Activated CD8-positive, alpha-beta memory T cell treated with anti-CD3 and anti-CD28 coated beads, Interleukin-2, amount 10 ng/mL, durations not matched to agents 7 days and 5 days (primary cell): ENCODE measurements at regions of chr18 and their contacts with region 1.

Region 1: GRCh38 chr18:3665780-3666525 is 216.0 kb downstream of the TGIF1 start:
- DNase-seq: peak; percentile 76
- ATAC-seq: peak; percentile 78
- H3K4me3 Mint-ChIP-seq: peak overlapping the region; percentile 16
- H3K27ac Mint-ChIP-seq: no peak overlapping the region
- H3K4me1 Mint-ChIP-seq: peaks cover 21% of the 10 kb centered on the region
- H3K27me3 Mint-ChIP-seq: peaks cover 3% of the 10 kb centered on the region

Region 2: GRCh38 chr18:3297025-3297984 is 368.6 kb before region 1 on chr18:
- CTCF ChIA-PET with region 1: interaction called, 31 read pairs
- DNase-seq: peak; percentile 97
- ATAC-seq: peak; percentile 98
- H3K4me3 Mint-ChIP-seq: peak overlapping the region; percentile 85
- H3K27ac Mint-ChIP-seq: peak overlapping the region; percentile 74
- H3K4me1 Mint-ChIP-seq: peaks cover 13% of the 10 kb centered on the region
- H3K27me3 Mint-ChIP-seq: peaks cover 37% of the 10 kb centered on the region

Region 3: GRCh38 chr18:3454365-3455089 is 211.4 kb before region 1 on chr18:
- CTCF ChIA-PET with region 1: interaction called, 50 read pairs
- DNase-seq: peak; percentile 63
- ATAC-seq: no peak
- H3K4me3 Mint-ChIP-seq: peak overlapping the region; percentile 87
- H3K27ac Mint-ChIP-seq: peak overlapping the region; percentile 83
- H3K4me1 Mint-ChIP-seq: peaks cover 55% of the 10 kb centered on the region
- H3K27me3 Mint-ChIP-seq: no peaks in the 10 kb centered on the region

Region 4: DNA sequence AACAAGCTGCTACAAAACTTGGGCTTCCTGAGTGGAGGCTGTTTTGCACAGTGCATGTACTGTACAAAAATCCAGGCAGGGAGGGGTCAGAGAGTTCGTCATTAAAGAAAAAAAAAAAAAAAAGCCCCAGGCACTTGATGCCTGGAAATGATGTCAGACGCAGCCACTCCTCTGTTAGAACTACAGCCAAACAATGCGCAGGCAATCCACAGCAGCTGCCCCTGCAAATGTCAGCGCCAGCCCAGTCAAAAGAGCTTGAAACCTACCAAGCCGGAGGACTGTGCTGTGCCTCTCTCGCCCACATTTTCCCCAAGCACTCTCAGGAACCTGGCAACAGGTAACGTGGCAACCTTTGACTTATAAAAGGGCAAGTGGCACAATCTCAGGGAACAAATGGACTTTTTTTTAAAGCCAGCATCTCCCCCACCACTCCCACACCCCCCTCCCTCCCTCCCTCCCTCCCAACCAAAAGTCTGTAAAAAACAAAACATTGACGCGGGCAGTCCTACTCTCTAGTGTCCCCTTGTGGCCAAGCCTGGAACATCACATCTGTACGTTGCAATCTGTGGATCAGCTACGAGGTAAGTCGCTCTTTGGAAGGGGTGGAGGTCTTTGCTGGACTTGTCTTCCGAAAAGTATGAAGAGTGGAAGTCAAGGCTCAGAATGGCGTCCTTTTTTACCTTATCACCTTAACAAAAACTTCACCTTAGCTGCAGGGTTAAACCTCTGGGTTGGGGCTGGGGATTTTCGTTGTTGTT is 71.9 kb before region 1 on chr18:
- CTCF ChIA-PET with region 1: interaction called, 61 read pairs
- DNase-seq: peak; percentile 92
- ATAC-seq: peak; percentile 86
- H3K4me3 Mint-ChIP-seq: peak overlapping the region; percentile 82
- H3K27ac Mint-ChIP-seq: peak overlapping the region; percentile 94
- H3K4me1 Mint-ChIP-seq: peaks cover 35% of the 10 kb centered on the region
- H3K27me3 Mint-ChIP-seq: no peaks in the 10 kb centered on the region

Region 5: DNA sequence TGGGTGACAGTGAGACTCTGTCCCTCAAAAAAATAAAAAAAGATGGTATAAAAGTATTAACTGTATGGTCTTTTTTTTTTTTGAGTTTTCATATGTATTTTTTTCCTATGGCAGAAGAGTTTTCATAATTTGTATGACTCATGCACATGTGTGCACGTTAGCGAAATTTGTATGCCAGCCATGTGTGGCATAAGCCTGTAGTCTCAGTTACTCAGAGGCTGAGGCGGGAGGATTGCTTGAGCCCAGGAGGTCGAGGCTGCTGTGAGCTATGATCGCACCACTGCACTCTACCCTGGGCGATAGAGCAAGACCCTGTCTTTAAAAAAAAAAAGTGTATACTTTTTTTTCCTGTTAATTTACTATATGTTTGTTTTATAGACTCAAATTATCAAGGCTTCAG is 55.1 kb before region 1 on chr18:
- CTCF ChIA-PET with region 1: interaction called, 22 read pairs
- DNase-seq: no peak
- ATAC-seq: no peak
- H3K4me3 Mint-ChIP-seq: no peak overlapping the region
- H3K27ac Mint-ChIP-seq: no peak overlapping the region
- H3K4me1 Mint-ChIP-seq: peaks cover 9% of the 10 kb centered on the region
- H3K27me3 Mint-ChIP-seq: no peaks in the 10 kb centered on the region

Region 6: GRCh38 chr18:3726238-3726951 is 60.4 kb after region 1 on chr18:
- CTCF ChIA-PET with region 1: no interaction called
- DNase-seq: no peak
- ATAC-seq: no peak
- H3K4me3 Mint-ChIP-seq: no peak overlapping the region
- H3K27ac Mint-ChIP-seq: no peak overlapping the region
- H3K4me1 Mint-ChIP-seq: no peaks in the 10 kb centered on the region
- H3K27me3 Mint-ChIP-seq: peaks cover 18% of the 10 kb centered on the region

Region 7: GRCh38 chr18:3923750-3924149 is 257.8 kb after region 1 on chr18:
- CTCF ChIA-PET with region 1: no interaction called
- DNase-seq: no peak
- ATAC-seq: no peak
- H3K4me3 Mint-ChIP-seq: no peak overlapping the region
- H3K27ac Mint-ChIP-seq: no peak overlapping the region
- H3K4me1 Mint-ChIP-seq: no peaks in the 10 kb centered on the region
- H3K27me3 Mint-ChIP-seq: peaks cover 4% of the 10 kb centered on the region